Kidney (tissue), 22 donors: ENCODE measurements at regions of chr14 and their contacts with region 1.

Region 1: DNA sequence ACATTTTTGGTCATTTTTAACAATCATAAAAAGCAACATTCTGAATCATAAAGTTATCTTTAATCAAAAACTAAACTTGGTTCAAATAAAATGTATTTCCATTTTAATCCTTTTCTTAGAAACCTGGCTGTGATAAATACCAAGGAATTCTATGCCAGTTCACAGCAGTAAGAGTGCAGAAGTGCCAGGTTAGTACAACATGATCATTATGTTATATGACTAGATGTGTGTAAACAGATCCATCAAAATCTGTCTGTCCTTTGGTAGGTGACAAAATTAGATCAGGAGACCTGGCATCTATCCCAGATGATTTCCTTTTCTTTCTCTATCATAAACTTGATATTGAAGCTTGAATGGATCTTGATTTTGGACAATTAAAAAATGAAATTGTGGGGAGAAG is 200.6 kb upstream of the STXBP6 start:
- DNase-seq: no peak
- H3K4me3 ChIP-seq: no peak overlapping the region
- H3K27ac ChIP-seq: no peak overlapping the region
- H3K4me1 ChIP-seq: no peaks in the 10 kb centered on the region
- H3K27me3 ChIP-seq: no peaks in the 10 kb centered on the region
- CTCF ChIP-seq: no peak

Region 2: GRCh38 chr14:25006961-25007795 is 243.3 kb before region 1 on chr14:
- intact Hi-C with region 1: loop called (anchors 10 kb)
- DNase-seq: no peak
- H3K4me3 ChIP-seq: no peak overlapping the region
- H3K27ac ChIP-seq: no peak overlapping the region
- H3K4me1 ChIP-seq: peaks cover 0 to 11% (median 0%) of the 10 kb centered on the region in 3 donors
- H3K27me3 ChIP-seq: no peaks in the 10 kb centered on the region
- CTCF ChIP-seq: no peak

Region 3: GRCh38 chr14:25062022-25062321 is 188.5 kb before region 1 on chr14:
- intact Hi-C with region 1: no loop called
- DNase-seq: no peak
- H3K4me3 ChIP-seq: no peak overlapping the region
- H3K27ac ChIP-seq: no peak overlapping the region
- H3K4me1 ChIP-seq: no peaks in the 10 kb centered on the region
- H3K27me3 ChIP-seq: no peaks in the 10 kb centered on the region
- CTCF ChIP-seq: no peak